ENCODE measurements at regions of chr10 and their contacts with region 1.

Region 1: GRCh38 chr10:59625721-59626522 is 83.7 kb downstream of the SLC16A9 start:
- DNase-seq: peak; percentile 40
- H3K4me3 ChIP-seq: no peak overlapping the region
- H3K27ac ChIP-seq: no peak overlapping the region
- H3K4me1 ChIP-seq: no peaks in the 10 kb centered on the region
- H3K27me3 ChIP-seq: no peaks in the 10 kb centered on the region
- CTCF ChIP-seq: peak; percentile 57 to 94 (median 88)
- POLR2A ChIP-seq: no peak

Region 2: DNA sequence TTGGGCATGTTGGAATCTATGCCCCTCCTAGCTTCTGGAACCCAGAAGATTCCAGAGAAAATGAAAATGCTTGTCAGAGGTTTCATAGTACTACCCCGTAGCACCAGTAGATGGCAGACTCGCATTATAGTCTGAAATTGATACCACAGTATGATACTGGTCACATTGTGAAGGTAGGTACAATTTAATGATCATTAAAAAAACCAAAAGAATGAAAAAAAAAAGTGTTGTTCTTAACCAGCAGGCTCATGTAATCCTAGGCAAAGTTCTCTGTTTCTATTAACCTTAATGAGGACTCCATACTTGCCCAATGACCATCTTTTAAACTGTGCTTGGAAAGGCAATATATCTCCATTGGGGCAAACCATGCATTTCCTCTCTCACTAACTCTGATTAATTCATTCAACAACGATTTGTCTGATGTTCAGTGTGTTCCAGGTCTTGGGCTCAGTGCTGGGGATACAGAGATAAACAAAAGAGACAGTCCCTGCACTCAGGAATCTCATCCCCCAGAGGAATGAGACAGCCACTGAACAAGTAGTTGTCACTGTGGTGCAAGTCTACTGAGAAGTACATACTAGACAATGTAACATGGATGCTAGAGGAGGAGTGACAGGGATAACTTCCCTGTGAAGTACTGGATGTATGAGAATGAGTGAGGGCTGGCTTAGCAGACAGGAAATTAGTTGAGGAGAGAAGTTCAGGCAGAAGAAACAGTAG is 673.0 kb before region 1 on chr10:
- intact Hi-C with region 1: loop called (anchors 5 kb)
- DNase-seq: peak; percentile 49
- H3K4me3 ChIP-seq: no peak overlapping the region
- H3K27ac ChIP-seq: peak overlapping the region; percentile 57 to 63
- H3K4me1 ChIP-seq: no peaks in the 10 kb centered on the region
- H3K27me3 ChIP-seq: no peaks in the 10 kb centered on the region
- CTCF ChIP-seq: peak; percentile 66 to 89 (median 80)
- POLR2A ChIP-seq: no peak

Region 3: GRCh38 chr10:59499460-59499859 is 126.5 kb before region 1 on chr10:
- intact Hi-C with region 1: no loop called
- DNase-seq: no peak
- H3K4me3 ChIP-seq: no peak overlapping the region
- H3K27ac ChIP-seq: no peak overlapping the region
- H3K4me1 ChIP-seq: no peaks in the 10 kb centered on the region
- H3K27me3 ChIP-seq: no peaks in the 10 kb centered on the region
- CTCF ChIP-seq: no peak
- POLR2A ChIP-seq: no peak

Region 4: DNA sequence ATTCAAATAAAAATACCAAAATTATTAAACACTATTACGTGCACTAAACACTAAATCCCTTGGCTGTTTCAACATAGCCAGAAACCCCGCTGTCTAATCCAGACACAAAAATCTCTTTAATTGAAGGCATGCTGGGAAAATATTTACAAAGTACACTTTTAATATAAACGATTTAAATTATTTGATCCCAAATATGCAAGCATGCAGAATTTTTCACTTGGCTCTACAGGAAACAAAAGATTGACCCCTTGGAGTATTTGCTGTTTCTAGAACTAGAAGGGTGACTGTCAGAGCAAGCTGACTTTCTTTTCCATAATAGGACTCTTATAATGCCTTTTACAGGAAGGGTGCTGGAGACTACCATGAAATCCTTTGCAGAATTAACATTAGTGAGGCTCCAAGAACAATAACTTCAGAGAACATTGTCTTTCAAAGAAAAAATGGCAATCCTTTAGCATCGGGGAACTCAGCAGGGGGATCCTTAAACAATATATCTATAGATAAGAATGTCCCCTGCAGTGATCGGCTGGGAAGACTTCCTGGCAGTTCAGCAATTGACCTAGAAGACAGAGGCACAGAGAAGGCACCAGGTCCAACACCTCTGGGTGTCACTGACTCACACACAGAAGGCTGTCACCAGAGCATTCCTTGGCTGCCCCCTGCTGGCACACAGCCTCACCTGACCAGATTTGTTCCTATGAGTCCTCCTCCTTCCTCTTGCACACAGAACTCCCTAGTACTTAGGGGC is 183.1 kb after region 1 on chr10:
- intact Hi-C with region 1: loop called (anchors 5 kb)
- DNase-seq: peak; percentile 64
- H3K4me3 ChIP-seq: no peak overlapping the region
- H3K27ac ChIP-seq: no peak overlapping the region
- H3K4me1 ChIP-seq: no peaks in the 10 kb centered on the region
- H3K27me3 ChIP-seq: no peaks in the 10 kb centered on the region
- CTCF ChIP-seq: peak in 3 of 4 experiments; percentile 63 to 69 (median 67)
- POLR2A ChIP-seq: no peak

Region 5: DNA sequence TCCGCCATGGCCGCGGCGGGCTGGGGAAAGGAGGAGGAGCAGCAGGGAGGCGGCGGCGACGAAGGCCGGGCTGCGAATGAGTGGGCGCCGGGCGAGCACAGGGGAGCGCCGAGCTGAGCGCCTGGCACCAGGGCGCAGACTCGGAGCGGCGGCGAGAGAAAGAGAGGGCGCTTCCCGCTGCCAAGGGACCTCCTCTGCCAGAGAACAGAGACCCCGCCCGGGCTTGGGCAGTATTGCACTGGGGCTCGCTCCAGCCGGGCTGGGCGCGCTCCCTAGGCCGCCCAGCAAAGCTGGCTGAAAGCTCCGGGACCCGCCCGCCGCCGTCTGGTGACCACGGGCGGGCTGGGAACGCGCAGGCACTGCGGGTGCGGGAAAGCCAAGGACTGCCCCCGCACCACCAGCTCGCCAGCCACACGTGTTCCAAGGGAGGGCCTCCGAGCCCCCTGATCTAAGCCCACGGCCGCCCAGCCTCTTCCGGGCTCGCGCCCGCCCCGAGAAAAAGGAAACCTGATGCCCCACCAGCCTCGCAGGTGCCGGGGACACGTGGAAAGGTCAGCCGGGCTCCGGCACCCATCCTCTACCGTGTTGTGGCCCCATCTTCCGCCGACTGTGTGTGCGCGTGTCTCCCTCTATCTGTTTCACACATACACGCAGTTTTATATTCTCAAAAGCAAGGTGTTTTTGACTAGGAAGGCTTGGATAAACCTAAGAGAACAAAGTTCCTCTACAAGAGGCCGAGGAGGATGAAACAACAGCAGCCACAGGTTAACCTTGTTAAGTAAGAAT is 280.7 kb after region 1 on chr10 and contains the start of gene CCDC6:
- intact Hi-C with region 1: loop called (anchors 5 kb)
- DNase-seq: peak; percentile 93
- H3K4me3 ChIP-seq: peak within 1 kb of the TSS; percentile 67 to 94
- H3K27ac ChIP-seq: peak within 1 kb of the TSS; percentile 90 to 92
- H3K4me1 ChIP-seq: no peaks in the 10 kb centered on the region
- H3K27me3 ChIP-seq: no peaks in the 10 kb centered on the region
- CTCF ChIP-seq: peak; percentile 62 to 93 (median 78)
- POLR2A ChIP-seq: peak; percentile 93
- total RNA-seq, gene CCDC6: 48.1 to 65.0 TPM

Measured in prostate gland (tissue), 2 donors.